ENCODE measurements at regions of chr11 and their contacts with region 1.

Region 1: DNA sequence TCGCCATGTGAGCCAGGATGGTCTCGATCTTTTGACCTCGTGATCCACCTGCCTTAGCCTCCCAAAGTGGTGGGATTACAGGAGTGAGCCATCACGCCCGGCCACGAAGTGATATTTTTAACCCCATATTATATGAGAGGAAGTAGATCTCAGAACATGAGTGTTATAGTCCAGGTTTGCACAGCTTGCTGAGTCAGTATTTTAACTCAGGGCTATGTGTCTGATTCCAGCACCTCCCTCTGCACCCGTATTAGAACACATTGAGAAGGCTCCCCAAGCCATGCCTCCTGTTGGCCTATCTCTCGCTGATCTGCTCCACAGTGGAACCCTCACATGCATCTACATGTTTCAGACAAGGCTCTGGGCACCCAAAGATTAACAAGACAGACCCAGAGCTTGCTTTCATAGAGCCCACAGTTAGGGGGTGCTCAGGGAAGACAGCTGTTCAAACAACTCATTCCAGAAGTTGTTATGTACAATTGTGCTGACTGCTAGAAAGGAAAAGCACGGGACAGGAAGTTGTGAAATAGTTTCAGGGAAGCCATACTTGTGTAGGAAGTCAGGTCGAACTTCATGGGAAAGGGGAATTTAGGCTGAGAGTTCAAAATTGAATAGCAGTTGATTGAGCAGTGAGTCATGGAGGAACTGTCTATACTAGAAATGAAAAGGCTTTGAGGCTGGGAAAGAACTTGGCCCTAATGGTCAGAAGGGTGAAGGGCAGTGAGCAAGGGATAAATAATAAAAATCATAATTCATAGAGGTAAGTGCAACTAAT is 49.3 kb upstream of the CLPB start:
- H3K4me3 ChIP-seq: no peak overlapping the region
- H3K27ac ChIP-seq: no peak overlapping the region
- H3K4me1 ChIP-seq: no peaks in the 10 kb centered on the region
- CTCF ChIP-seq: no peak

Region 2: DNA sequence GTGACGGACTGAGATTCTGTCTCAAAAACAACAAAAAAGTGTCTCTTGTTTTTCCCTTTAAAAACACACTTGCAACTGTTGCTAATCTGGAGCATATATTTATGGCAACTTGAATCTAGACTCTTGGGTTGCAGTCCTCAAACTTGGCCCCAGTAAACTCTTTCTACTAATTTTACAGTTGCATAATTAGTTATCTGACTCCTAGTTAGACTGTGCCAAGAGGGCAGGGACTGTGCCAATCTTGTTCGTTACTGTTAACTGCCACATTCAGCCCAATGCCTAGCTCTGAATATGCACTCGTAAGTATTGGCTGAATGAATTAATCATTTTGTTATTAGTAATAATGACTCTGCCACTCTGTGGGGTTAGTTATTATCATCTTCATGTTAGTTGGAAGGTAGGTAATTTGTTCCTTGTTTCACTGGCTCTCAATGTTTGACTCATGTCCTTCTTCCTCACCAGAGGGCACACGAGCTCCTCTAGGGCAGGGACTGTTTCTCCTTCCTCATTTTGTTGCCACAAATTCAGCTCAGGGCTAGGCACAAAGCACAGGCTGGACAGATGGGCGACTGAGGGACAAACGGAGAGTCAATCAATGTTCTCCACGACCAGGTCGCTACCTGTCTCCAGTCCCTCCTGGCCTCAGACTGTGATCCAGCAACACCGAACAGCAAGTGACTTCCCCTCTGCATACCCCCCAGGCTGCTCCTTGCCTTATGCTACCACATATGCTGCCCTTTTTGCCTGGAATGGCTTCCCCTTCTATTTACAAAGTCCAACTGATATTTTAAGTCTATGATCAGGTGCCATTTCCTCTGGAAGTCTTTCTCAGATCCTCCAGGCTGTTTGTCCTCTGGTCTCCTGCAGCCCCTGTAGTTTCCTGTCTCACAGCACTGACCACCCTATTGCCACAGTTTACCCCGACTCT is 58.3 kb before region 1 on chr11:
- CTCF ChIA-PET with region 1: no interaction called
- POLR2A ChIA-PET with region 1: no interaction called
- H3K4me3 ChIP-seq: no peak overlapping the region
- H3K27ac ChIP-seq: no peak overlapping the region
- H3K4me1 ChIP-seq: no peaks in the 10 kb centered on the region
- CTCF ChIP-seq: no peak

Region 3: DNA sequence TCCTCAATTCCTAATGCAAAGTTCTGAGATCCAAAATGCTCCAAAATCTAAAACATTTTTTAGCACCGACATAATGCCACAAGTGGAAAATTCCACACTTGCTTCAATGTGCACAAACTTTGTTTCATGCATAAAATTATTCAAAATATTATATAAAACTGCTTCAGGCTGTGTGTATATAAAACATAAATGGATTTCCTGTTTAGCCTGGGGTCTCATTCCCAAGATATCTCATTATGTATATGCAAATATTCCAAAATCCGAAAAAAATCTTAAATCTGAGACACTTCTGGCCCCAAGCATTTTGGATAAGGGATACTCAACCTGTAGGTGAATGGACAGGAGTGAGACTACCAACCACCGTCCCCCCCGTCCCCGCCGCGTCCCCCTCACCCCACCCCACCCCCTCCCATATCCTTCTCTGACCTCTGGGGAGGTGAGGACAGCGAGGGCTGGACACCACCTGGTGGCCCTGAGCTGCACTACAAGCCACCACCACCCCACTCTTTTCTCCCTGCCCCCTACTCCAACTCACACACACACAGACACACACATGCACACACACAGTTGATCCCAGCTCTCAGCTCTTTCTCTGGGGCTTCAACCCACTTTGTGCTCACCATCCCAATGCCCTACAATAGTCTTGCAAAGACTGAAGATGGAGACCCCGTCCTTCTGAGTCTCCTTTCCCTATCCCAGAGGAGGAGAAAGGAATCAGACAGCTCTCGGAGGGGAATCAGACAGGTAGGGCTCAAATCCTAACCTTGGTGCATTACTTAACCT is 89.7 kb after region 1 on chr11:
- CTCF ChIA-PET with region 1: interaction called, 17 read pairs
- POLR2A ChIA-PET with region 1: no interaction called
- H3K4me3 ChIP-seq: no peak overlapping the region
- H3K27ac ChIP-seq: no peak overlapping the region
- H3K4me1 ChIP-seq: no peaks in the 10 kb centered on the region; the same call in 1 of the 2 replicates
- CTCF ChIP-seq: peak; percentile 54; the same call in 1 of the 2 replicates

Region 4: GRCh38 chr11:72712168-72712751 is 228.7 kb after region 1 on chr11:
- CTCF ChIA-PET with region 1: no interaction called
- POLR2A ChIA-PET with region 1: no interaction called
- H3K4me3 ChIP-seq: no peak overlapping the region
- H3K27ac ChIP-seq: no peak overlapping the region
- H3K4me1 ChIP-seq: no peaks in the 10 kb centered on the region
- CTCF ChIP-seq: no peak

Region 5: GRCh38 chr11:72821883-72822799 is 338.5 kb after region 1 on chr11:
- CTCF ChIA-PET with region 1: no interaction called
- POLR2A ChIA-PET with region 1: no interaction called
- H3K4me3 ChIP-seq: peak overlapping the region; percentile 36
- H3K27ac ChIP-seq: peak overlapping the region; percentile 47; the same call in 1 of the 2 replicates
- H3K4me1 ChIP-seq: no peaks in the 10 kb centered on the region
- CTCF ChIP-seq: peak; percentile 91